ENCODE measurements at regions of chr1 and their contacts with region 1.

Region 1: GRCh38 chr1:204128964-204129896 is 22.6 kb downstream of the ETNK2 start:
- DNase-seq: peak in 9 of 10 donors; percentile 43 to 80 (median 58)
- H3K4me3 ChIP-seq: peak overlapping the region in 16 of 59 donors; percentile 8 to 35 (median 20)
- H3K27ac ChIP-seq: peak overlapping the region in 9 of 59 donors; percentile 0 to 65 (median 23)
- H3K27me3 ChIP-seq: no peaks in the 10 kb centered on the region
- CTCF ChIP-seq: peak; percentile 62 to 98 (median 93)

Region 2: DNA sequence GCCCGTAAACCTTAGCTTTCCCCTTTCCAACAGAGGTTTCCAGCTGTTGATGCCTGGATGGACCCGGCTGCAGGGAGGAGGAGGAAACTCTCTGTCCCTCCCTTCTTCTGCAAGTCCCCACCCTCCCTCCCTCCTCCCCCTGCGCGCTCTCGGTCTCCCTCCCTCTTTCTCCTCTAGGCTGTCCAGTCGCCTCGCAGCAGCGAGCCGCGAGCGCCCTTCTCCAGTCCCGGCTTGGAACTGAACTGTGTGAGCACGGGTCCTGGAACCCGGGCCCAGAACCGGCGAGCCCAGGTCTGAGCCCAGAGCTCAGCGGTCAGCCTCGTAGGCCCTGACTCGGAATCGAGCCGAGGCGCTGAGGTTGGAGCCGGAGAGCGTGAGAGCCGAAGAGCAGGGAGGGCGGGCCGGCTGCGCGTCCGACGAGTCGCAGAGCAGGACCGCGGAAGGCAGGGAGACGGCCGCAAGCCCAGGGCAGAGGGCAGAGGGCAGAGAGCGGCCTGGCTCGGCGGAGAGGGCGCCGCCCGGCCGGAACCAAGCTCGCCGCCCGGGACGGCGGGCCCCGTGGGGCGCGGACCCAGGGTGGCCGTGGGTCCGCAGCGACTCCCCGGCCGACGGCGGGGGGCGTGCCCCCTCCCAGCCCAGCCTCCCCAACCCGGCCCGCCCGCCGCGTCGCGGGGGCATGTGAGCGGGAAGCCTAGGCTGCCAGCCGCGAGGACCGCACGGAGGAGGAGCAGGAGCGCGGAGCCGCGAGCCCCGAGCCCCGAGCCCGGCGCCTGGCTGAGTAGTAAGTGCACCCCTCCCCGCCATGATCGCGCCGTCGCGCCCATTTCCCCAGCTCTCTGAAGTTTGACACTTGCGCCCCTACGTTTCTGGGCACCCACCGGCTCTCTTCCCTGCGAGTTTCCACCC is 56.0 kb before region 1 on chr1 and contains the start of gene SOX13:
- intact Hi-C with region 1: loop called (anchors 2 to 5 kb)
- DNase-seq: peak; percentile 74 to 90 (median 86)
- H3K4me3 ChIP-seq: peak within 1 kb of the TSS; percentile 60 to 95 (median 76)
- H3K27ac ChIP-seq: peak within 1 kb of the TSS in 58 of 59 donors; percentile 34 to 92 (median 84)
- H3K27me3 ChIP-seq: no peaks in the 10 kb centered on the region
- CTCF ChIP-seq: peak in 38 of 56 donors; percentile 4 to 55 (median 32)
- total RNA-seq, gene SOX13: 13.7 to 62.1 (median 24.8) TPM